ENCODE measurements at regions of chr11 and their contacts with region 1.

Region 1: DNA sequence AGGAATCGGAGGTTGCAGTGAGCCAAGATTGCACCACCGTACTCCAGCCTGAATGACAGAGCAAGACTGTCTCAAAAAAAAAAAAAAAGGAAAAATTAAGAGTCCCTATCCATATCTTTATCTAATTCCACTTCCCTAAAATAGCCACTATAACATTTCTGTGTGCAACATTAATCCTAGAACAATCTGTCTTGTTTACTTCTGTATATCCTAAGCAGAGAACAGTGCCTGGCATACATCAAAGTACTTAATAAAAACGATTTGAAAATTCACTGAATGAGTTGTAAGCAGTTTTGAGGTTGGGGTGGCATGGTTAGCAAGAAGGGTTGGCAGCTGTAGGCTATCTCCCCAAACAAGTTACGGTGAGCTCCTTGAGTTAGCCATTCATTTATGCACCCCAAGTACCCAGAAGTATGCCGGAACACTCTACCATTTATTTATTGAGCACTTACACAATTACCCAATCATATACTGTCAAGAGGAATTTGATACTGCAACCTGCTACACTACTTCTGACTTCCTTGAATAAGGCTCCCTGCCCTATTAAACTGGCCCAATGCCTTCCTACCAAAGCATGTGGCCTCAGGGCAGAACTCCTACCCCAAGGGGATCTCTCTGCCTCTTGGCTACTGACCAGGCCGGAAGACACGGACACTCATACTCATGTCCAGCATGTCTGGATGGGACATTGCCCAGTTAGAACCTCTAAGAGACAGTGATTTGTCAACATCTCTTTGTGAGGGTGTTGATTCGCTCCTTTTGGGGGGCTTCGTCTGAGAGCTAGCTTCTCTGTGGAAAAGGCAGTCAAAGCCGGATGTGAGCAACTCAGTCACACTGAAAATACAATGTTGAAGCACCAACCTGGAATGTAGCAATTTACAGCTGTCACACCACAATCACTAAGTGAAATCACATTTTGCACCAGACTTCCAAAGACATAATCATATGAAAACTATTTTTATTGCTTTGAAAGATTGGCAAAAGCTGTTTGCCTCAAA is 16.3 kb upstream of the TMEM41B start:
- DNase-seq: no peak
- ATAC-seq: peak; percentile 62
- H3K4me3 ChIP-seq: no peak overlapping the region
- H3K27ac ChIP-seq: peak overlapping the region; percentile 24; the same call in 1 of the 2 replicates
- H3K4me1 ChIP-seq: no peaks in the 10 kb centered on the region; the same call in 1 of the 2 replicates
- H3K27me3 ChIP-seq: no peaks in the 10 kb centered on the region
- CTCF ChIP-seq: no peak

Region 2: DNA sequence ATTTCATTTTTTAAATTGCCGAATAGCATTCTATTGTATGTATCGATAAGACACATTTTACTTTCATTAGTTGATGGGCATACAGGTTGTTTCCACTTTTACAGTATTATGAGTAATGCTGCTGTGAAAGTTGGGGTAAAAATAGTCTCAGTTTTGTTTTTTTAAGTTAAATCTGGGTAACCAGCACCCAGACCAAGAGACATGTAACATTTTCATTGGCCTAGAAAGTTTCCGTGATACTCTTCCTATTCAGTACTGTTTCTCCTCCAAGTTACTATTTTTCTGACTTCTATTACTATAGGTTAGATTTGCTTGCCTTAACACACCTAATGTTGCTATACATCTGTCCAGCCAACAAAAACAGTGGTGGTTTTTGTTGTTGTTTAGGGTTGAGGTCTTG is 66.1 kb after region 1 on chr11:
- CTCF ChIA-PET with region 1: no interaction called
- POLR2A ChIA-PET with region 1: interaction called, 12 read pairs
- in situ Hi-C with region 1: no loop called
- intact Hi-C with region 1: no loop called
- DNase-seq: no peak
- ATAC-seq: no peak
- H3K4me3 ChIP-seq: no peak overlapping the region
- H3K27ac ChIP-seq: no peak overlapping the region
- H3K4me1 ChIP-seq: peaks cover 20% of the 10 kb centered on the region
- H3K27me3 ChIP-seq: no peaks in the 10 kb centered on the region
- CTCF ChIP-seq: no peak

Measured in Panc1 (cell line).